Left cardiac atrium (tissue), 4 donors: ENCODE measurements at regions of chr15 and their contacts with region 1.

Region 1: GRCh38 chr15:42018306-42019224 is 2.3 kb downstream of the PLA2G4E start:
- DNase-seq: peak; percentile 77
- ATAC-seq: peak; percentile 90

Region 2: GRCh38 chr15:41634072-41634626 is 384.4 kb before region 1 on chr15:
- intact Hi-C with region 1: no loop called
- DNase-seq: no peak
- ATAC-seq: no peak

Region 3: DNA sequence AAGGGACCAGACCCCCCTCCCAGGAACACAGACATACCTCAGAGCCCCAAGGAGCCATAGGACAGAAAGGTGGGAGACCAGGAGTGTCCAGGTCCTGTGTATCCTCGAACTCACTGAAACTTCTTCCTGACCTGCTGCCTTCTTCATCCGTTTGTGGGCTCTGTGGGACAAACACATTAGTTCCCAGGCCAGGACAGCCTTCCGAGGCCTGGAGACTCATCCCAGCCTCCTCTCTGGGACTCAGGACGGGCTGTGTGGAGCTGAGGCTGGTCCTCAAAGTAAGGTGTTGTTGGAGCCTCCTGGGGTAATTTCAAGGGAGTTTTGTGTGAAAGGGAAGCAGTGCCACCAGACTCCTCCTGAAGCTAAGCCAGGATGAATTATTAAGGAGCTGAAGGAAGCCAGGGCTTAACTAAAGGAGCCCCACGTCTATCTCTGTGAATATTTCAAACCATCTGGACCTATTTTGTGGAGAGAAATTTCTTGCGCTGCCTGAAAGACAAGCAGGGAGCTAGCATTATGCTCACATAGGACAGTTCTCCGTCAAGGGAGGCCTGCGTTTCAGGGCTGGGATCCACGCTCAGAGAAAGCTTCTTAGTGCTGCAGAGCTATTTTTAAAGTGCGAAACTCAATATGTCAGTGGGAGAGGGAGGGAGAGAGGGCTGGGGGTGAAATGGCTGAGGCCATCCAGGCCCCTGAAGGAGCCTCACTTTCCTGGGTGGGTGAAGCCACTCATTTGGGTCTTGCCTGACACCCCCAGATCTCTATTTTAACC is 32.1 kb after region 1 on chr15:
- intact Hi-C with region 1: loop called in 1 of 2 experiments (anchors 5 kb)
- DNase-seq: no peak
- ATAC-seq: peak; percentile 68 to 78